ENCODE measurements at regions of chr6 and their contacts with region 1.

Region 1: DNA sequence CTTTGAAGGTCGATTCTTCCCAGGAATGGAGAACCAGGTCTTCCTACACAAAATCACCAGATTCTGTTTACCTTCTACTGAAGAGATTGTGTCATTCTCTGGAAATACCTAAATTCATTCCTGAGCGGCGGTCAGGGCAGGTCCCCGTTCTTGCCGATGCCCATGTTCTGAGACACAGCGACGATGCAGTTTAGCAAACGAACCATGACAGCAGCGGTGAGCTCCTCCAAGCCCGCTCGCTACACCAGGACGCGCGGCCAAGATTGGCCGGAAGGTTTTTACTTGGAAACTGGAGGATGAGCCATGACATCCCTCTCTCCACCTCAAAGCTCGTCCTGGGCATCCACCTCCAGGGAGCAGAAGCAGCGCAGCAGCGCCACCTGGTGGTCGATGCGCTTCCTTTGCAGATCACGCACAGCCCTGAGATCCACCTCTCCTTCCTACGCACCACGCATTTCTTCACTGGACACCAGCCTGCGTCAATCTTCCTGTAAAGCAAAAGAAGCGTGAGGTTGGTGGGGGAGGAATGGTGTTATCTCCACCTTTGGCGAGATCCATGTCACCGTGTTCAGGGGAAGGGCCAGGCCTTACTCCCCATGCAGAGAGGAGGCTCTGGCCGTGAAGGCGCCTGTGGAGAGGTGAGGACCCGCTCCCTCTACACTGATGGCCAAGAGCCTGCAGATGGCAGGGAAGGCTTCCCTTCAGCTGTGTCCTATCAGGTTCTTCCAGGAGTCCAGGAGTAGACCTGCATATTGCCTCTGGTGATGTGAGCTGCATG is 9.9 kb upstream of the HLA-B start:
- ATAC-seq: peak; percentile 100
- H3K4me3 ChIP-seq: peak overlapping the region in 4 of 5 donors; percentile 4 to 27 (median 19)
- H3K27ac ChIP-seq: no peak overlapping the region
- H3K4me1 ChIP-seq: no peaks in the 10 kb centered on the region

Region 2: GRCh38 chr6:31128093-31128676 is 238.7 kb before region 1 on chr6:
- in situ Hi-C with region 1: loop called in 4 of 9 experiments (anchors 10 to 25 kb)
- ATAC-seq: peak in 5 of 8 experiments; percentile 32 to 80 (median 55)
- H3K4me3 ChIP-seq: no peak overlapping the region
- H3K27ac ChIP-seq: no peak overlapping the region
- H3K4me1 ChIP-seq: peaks cover 0 to 3% of the 10 kb centered on the region in 2 donors

Region 3: DNA sequence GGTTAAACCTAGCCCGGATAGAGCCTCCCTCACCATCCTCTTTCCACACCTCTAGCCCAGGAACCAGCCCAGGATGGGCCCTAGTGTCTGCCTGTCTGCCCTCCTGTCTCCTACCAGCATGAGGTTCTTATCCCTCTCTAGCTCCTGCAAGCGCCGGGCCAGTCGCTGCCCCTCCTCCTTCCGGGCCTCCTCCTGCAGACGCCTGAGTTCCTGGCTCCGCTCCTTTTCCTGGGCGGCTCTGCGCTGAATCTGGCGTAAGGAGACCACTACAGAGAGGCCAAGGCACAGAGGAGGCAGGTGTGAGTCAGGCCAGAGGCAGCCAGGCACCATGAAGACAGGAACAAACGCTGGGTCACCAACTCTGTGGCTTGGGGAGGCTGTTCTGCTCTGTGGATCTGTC is 223.7 kb before region 1 on chr6:
- in situ Hi-C with region 1: loop called in 7 of 9 experiments (anchors 5 to 25 kb)
- ATAC-seq: peak in 5 of 8 experiments; percentile 3 to 52 (median 28)
- H3K4me3 ChIP-seq: no peak overlapping the region
- H3K27ac ChIP-seq: no peak overlapping the region
- H3K4me1 ChIP-seq: peaks cover 8 to 11% of the 10 kb centered on the region in 2 donors

Region 4: DNA sequence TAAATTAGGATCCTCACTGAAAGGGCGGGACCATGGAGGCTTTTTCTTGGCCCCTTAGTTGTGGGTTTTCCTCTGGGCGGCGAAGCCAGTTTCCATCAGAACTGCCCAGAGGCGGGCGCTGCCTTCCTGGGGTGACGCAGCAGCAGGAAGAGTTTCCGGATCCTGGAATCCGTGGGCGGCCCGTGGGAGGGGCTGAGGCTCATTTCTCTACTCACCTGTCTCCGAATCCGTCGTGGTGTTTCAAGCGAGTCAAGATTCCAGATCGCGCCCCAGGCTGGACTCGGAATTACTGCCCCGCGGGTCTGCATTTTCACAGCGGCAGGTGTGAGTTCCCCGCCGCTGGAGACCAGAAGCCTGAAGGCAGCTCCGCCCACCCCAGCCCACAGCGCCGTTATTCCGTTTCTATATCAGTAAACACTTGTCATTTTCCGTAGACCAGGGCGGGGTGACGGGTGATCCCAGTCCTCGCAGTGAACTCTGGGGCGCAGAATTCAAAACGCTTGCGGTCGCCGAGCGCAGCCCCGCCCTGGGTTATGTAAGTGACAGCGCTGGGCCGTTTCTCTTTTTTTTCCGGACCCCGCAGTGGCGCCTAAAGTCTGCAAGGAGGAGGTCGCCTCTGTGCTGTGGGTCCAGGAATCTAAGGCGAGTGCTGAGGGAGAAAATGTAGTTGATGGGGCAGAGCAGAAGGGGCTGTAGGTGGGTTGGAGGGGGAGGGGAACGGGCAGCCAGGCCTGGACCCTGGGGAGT is 169.2 kb before region 1 on chr6:
- in situ Hi-C with region 1: loop called in 2 of 9 experiments (anchors 10 to 25 kb)
- ATAC-seq: peak; percentile 76 to 88 (median 85)
- H3K4me3 ChIP-seq: peak overlapping the region; percentile 45 to 69 (median 59)
- H3K27ac ChIP-seq: peak overlapping the region; percentile 89 to 96
- H3K4me1 ChIP-seq: peaks cover 3 to 7% of the 10 kb centered on the region in 2 donors

Region 5: GRCh38 chr6:31203345-31203979 is 163.4 kb before region 1 on chr6:
- in situ Hi-C with region 1: loop called in 2 of 9 experiments (anchors 10 to 25 kb)
- ATAC-seq: peak; percentile 83 to 94 (median 89)
- H3K4me3 ChIP-seq: peak overlapping the region in 1 of 5 donors; percentile 19
- H3K27ac ChIP-seq: no peak overlapping the region
- H3K4me1 ChIP-seq: peaks cover 7 to 11% of the 10 kb centered on the region in 2 donors

Region 6: GRCh38 chr6:31246050-31246521 is 120.8 kb before region 1 on chr6:
- in situ Hi-C with region 1: no loop called
- ATAC-seq: peak in 6 of 8 experiments; percentile 31 to 100 (median 70)
- H3K4me3 ChIP-seq: no peak overlapping the region
- H3K27ac ChIP-seq: no peak overlapping the region
- H3K4me1 ChIP-seq: no peaks in the 10 kb centered on the region

Measured in motor neuron (in vitro differentiated cells).